A549 (cell line): ENCODE measurements at regions of chr17 and their contacts with region 1.

Region 1: GRCh38 chr17:76868176-76868668 is at the start of gene MGAT5B:
- DNase-seq: peak; percentile 87 to 96
- ATAC-seq: peak; percentile 69 to 84
- H3K4me3 ChIP-seq: peak within 1 kb of the TSS; percentile 70
- H3K27ac ChIP-seq: peak within 1 kb of the TSS; percentile 93 to 97
- H3K4me1 ChIP-seq: peaks cover 52% of the 10 kb centered on the region
- CTCF ChIP-seq: peak; percentile 99
- EP300 ChIP-seq: no peak
- POLR2A ChIP-seq: peak; percentile 38
- RAD21 ChIP-seq: peak; percentile 84 to 100
- polyA plus RNA-seq, gene MGAT5B: 7.6 and 10.3 TPM in 2 replicates

Region 2: DNA sequence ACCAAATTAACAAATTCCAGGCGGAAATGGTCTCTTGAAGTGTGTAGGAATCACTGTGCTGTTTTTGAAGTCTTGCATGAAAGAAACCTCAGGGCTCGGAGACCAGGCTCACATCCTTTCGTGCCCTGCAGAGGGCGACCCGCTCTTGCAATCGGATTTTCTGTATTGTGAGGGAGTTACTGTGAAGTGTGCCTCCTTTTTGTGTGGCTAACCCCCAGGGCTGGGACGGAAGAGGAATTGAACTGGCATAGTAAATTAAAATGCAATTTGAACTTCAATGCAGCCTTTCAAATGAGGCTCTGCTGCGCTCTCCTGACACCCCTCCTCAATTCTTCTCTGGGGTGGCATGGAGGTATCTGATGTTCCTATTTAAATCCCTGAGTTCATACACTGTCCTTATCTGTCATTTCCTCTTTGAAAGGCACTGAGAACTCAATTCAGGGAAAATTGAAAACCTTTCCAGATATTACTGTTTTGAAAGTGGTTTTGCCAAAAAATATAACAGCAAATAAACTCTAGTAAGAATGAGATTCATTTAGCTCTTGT is 51.6 kb before region 1 on chr17:
- CTCF ChIA-PET with region 1: interaction called, 34 read pairs
- POLR2A ChIA-PET with region 1: no interaction called
- DNase-seq: peak; percentile 75 to 85
- ATAC-seq: peak; percentile 93 to 95
- H3K4me3 ChIP-seq: no peak overlapping the region
- H3K27ac ChIP-seq: no peak overlapping the region
- H3K4me1 ChIP-seq: no peaks in the 10 kb centered on the region
- CTCF ChIP-seq: peak; percentile 88
- EP300 ChIP-seq: no peak
- POLR2A ChIP-seq: no peak
- RAD21 ChIP-seq: peak; percentile 88 to 91

Region 3: DNA sequence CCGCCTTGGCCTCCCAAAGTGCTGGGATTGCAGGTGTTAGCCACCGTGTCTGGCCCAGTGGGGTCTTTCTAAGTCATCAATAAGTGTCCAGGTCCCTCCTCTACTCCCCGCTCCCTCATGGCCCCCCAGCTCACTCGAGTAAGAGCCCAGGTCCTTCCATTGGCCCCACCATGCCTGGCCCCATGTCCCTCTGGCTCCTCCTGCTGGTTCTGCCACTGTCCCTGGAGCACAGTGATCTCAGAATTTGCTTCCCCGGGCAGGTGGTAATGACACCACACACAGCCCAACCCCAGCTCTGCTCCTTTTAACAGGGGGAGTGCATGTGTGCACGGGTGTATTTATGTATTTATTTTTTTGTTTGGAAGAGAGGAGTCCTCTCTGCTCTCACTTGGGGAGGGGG is 19.6 kb after region 1 on chr17:
- CTCF ChIA-PET with region 1: interaction called, 100 read pairs
- POLR2A ChIA-PET with region 1: interaction called, 7 read pairs
- DNase-seq: no peak
- ATAC-seq: peak; percentile 18 to 46; a peak in 2 of 6 replicates
- H3K4me3 ChIP-seq: no peak overlapping the region
- H3K27ac ChIP-seq: no peak overlapping the region
- H3K4me1 ChIP-seq: no peaks in the 10 kb centered on the region
- CTCF ChIP-seq: no peak
- EP300 ChIP-seq: no peak
- POLR2A ChIP-seq: no peak
- RAD21 ChIP-seq: peak in 1 of 2 experiments; percentile 32; a peak in 1 of 5 replicates

Region 4: GRCh38 chr17:76943781-76944213 is 75.6 kb after region 1 on chr17:
- CTCF ChIA-PET with region 1: interaction called, 15 read pairs
- POLR2A ChIA-PET with region 1: no interaction called
- DNase-seq: no peak
- ATAC-seq: no peak
- H3K4me3 ChIP-seq: no peak overlapping the region
- H3K27ac ChIP-seq: 0 out of 6 replicates have a peak overlapping the region, but pooled peaks of 1 of the 2 experiments have one; percentile 2
- H3K4me1 ChIP-seq: no peaks in the 10 kb centered on the region
- CTCF ChIP-seq: no peak
- EP300 ChIP-seq: no peak
- POLR2A ChIP-seq: no peak
- RAD21 ChIP-seq: no peak

Region 5: GRCh38 chr17:77036807-77037381 is 168.7 kb after region 1 on chr17:
- CTCF ChIA-PET with region 1: interaction called, 21 read pairs
- POLR2A ChIA-PET with region 1: no interaction called
- DNase-seq: no peak
- ATAC-seq: peak; percentile 11 to 29; a peak in 2 of 6 replicates
- H3K4me3 ChIP-seq: no peak overlapping the region
- H3K27ac ChIP-seq: no peak overlapping the region
- H3K4me1 ChIP-seq: no peaks in the 10 kb centered on the region
- CTCF ChIP-seq: no peak
- EP300 ChIP-seq: no peak
- POLR2A ChIP-seq: no peak
- RAD21 ChIP-seq: no peak

Region 6: DNA sequence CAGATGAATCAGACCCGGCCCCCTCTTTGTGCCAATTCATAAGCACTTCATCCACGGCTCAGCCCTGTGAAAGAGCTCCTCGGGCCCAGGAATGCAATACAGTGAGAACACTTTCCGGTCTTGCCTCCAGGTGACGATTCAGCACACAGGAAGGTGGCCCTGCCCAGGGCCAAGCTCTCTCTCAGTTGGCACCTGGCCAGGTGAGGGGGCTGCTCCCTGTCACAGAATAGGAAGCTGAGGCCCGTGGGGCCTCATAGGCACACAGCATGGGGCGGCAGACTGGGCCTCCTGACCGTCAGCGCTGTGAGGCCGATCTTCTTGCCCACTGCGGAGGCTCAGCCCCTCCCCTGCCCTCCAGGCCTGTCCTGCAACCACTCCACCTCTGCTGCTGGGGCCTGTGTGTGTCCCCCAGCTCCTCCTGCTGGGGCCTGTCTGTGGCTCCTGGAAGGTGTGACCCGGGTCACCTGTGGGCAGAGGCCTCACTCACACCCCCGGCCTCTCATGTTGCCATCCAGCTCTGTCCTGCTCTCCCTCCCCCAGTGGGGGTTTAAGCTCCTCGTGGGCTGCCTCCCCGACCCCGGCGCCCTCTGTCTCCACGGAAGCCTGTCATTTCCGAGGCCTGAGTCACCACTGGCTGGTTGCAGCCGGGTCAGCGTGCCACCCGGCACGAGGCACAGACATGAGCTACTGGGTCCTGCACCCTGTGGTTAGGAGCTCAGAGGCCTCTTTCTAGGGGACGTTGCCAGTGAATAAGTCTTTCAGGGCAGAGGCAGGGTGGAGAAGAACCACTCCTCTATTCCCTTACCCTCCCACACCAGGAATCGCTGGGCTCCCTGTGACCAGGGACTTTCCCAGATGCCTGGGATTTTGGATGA is 387.0 kb after region 1 on chr17:
- CTCF ChIA-PET with region 1: interaction called, 12 read pairs
- POLR2A ChIA-PET with region 1: no interaction called
- DNase-seq: peak; percentile 87 to 93
- ATAC-seq: peak; percentile 82 to 86
- H3K4me3 ChIP-seq: no peak overlapping the region
- H3K27ac ChIP-seq: peak overlapping the region; percentile 80 to 88
- H3K4me1 ChIP-seq: peaks cover 36% of the 10 kb centered on the region
- CTCF ChIP-seq: no peak; the same call in 2 of the 3 replicates
- EP300 ChIP-seq: peak in 1 of 2 experiments; percentile 52; a peak in 1 of 5 replicates
- POLR2A ChIP-seq: no peak
- RAD21 ChIP-seq: peak in 1 of 2 experiments; percentile 34; a peak in 4 of 5 replicates

Region 7: GRCh38 chr17:77622647-77623046 is 754.4 kb after region 1 on chr17:
- CTCF ChIA-PET with region 1: no interaction called
- POLR2A ChIA-PET with region 1: no interaction called
- DNase-seq: peak in 1 of 2 experiments; percentile 39
- ATAC-seq: peak; percentile 66 to 71; a peak in 4 of 6 replicates
- H3K4me3 ChIP-seq: no peak overlapping the region
- H3K27ac ChIP-seq: peak overlapping the region; percentile 58 to 62; a peak in 5 of 6 replicates
- H3K4me1 ChIP-seq: peaks cover 23% of the 10 kb centered on the region
- CTCF ChIP-seq: no peak
- EP300 ChIP-seq: no peak
- POLR2A ChIP-seq: no peak
- RAD21 ChIP-seq: no peak